ENCODE measurements at regions of chr5 and their contacts with region 1.

Region 1: DNA sequence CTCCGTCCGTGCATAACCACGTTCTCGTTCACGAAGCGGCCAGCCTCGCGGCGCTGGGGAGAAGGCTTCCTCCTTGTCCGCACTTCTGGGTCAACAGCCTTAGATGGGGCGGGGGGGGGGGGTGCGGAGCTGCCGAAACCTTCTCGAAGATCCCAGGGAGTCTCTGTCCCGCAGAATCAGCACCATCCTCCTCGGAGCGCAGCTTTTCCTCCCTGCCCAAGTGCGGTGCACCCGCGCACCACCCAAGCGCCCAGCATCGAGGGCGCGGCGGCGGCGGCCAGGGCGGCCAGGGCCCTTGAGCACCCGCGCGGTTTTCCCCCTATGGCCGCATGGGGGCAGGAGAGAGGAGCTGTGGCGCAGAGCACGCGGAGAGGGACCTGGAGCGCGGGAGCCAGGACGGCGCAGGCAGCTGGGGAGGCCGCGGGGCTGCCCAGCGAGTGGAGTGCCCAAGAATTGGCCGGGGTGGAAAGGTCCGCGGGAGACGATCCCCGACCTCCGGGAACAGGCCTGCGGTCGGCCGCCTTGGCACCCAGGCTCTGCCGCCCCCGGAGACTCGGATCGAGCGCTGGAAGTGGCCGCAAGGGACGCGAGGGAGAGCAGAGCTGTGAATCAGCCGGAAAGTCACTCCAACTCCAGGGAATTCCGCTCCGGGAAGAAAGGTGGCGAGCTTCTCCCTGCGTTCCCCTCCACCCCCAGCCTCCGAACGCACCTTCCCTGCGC is 43.1 kb downstream of the TMEM174 start:
- DNase-seq: peak in 1 of 2 experiments; percentile 92
- H3K4me3 ChIP-seq: peak overlapping the region; percentile 41 to 64 (median 60)
- H3K27ac ChIP-seq: no peak overlapping the region
- H3K4me1 ChIP-seq: peaks cover 5 to 26% (median 9%) of the 10 kb centered on the region in 4 experiments
- H3K27me3 ChIP-seq: peaks cover 15 to 42% (median 38%) of the 10 kb centered on the region in 4 experiments
- CTCF ChIP-seq: peak; percentile 67 to 88 (median 81)
- EP300 ChIP-seq: no peak
- POLR2A ChIP-seq: peak in 1 of 2 experiments; percentile 65; a peak in 1 of 3 replicates
- RAD21 ChIP-seq: peak; percentile 47 to 65; a peak in 3 of 4 replicates

Region 2: GRCh38 chr5:73152411-73153388 is 63.4 kb before region 1 on chr5:
- CTCF ChIA-PET with region 1: interaction called, 12 read pairs
- POLR2A ChIA-PET with region 1: no interaction called
- DNase-seq: no peak
- H3K4me3 ChIP-seq: no peak overlapping the region
- H3K27ac ChIP-seq: no peak overlapping the region
- H3K4me1 ChIP-seq: peaks cover 0 to 2% (median under 1%) of the 10 kb centered on the region in 4 experiments; a peak in 1 of 7 replicates
- H3K27me3 ChIP-seq: no peaks in the 10 kb centered on the region
- CTCF ChIP-seq: peak in 2 of 3 experiments; percentile 42; a peak in 3 of 4 replicates
- EP300 ChIP-seq: no peak
- POLR2A ChIP-seq: no peak
- RAD21 ChIP-seq: peak; percentile 44 to 56

Region 3: DNA sequence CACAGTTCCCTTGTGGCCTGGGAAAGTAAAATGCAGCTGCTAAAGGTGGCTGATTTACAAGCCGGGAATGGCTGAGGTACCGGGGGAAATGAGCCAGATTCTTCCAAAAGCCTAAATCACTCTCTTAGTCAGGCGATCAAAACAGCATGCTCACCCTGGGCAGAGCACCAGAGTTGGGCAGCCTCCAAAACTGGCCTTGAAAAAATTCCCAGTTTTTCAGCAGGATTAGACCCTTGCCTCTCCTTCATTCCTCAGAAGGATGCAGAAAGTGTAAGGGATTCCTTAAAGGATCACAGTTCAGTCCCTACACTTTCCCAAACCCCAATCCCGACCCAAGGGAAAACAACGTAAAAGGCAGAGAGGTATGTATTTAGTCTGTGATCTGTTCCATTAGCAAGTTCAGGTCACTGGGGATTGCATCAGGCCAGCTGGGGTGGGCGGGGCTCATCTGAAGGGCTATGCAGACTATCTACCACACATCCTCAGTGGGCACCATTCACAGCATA is 26.1 kb before region 1 on chr5:
- CTCF ChIA-PET with region 1: interaction called, 13 read pairs
- POLR2A ChIA-PET with region 1: no interaction called
- DNase-seq: no peak
- H3K4me3 ChIP-seq: no peak overlapping the region
- H3K27ac ChIP-seq: no peak overlapping the region
- H3K4me1 ChIP-seq: peaks cover 2 to 8% (median 3%) of the 10 kb centered on the region in 4 experiments; a peak in 5 of 7 replicates
- H3K27me3 ChIP-seq: no peaks in the 10 kb centered on the region
- CTCF ChIP-seq: no peak
- EP300 ChIP-seq: no peak
- POLR2A ChIP-seq: no peak
- RAD21 ChIP-seq: no peak

Region 4: GRCh38 chr5:73233347-73234200 is 17.5 kb after region 1 on chr5:
- CTCF ChIA-PET with region 1: interaction called, 90 read pairs
- POLR2A ChIA-PET with region 1: interaction called, 14 read pairs
- DNase-seq: peak in 1 of 2 experiments; percentile 76
- H3K4me3 ChIP-seq: peak overlapping the region; percentile 9 to 62 (median 40)
- H3K27ac ChIP-seq: no peak overlapping the region
- H3K4me1 ChIP-seq: peaks cover 4 to 30% (median 20%) of the 10 kb centered on the region in 4 experiments
- H3K27me3 ChIP-seq: peaks cover 55 to 82% (median 74%) of the 10 kb centered on the region in 4 experiments
- CTCF ChIP-seq: peak; percentile 28 to 30 (median 29); a peak in 3 of 4 replicates
- EP300 ChIP-seq: no peak
- POLR2A ChIP-seq: no peak
- RAD21 ChIP-seq: peak in 1 of 2 experiments; percentile 16; a peak in 1 of 4 replicates

Region 5: DNA sequence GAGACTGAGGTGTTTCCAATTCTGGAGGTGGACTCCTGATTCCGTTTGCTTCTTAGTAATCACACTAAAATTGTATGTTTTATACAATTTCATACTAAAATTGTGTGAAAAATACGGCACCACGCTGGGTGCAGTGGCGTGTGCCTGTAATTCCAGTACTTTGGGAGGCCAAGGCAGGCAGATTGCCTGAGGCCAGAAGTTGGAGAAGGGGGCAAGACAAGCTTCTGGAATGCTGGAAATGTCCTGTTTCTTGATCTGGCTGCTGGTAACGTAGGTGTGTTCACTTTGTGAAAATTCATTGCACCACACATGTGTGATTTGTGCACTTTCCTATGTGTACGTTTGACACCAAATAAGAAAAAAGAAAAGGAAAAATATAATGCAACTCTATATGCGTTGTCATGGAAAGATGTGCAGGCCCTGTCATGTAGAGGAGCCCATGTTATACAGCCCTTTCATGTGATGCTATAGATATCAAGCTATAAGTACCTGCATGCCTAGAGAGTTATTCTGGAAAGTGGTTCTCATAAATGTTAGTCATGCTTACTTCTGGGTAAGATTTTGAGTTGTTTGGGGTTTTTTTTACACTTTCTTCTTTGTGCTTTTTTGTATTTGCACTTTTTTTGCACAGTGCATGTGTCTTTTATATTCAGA is 76.9 kb after region 1 on chr5:
- CTCF ChIA-PET with region 1: interaction called, 11 read pairs
- POLR2A ChIA-PET with region 1: interaction called, 3 read pairs
- DNase-seq: no peak
- H3K4me3 ChIP-seq: no peak overlapping the region
- H3K27ac ChIP-seq: no peak overlapping the region
- H3K4me1 ChIP-seq: peaks cover 4 to 21% (median 19%) of the 10 kb centered on the region in 4 experiments; a peak in 6 of 7 replicates
- H3K27me3 ChIP-seq: peaks cover 22 to 36% (median 35%) of the 10 kb centered on the region in 4 experiments
- CTCF ChIP-seq: no peak
- EP300 ChIP-seq: no peak
- POLR2A ChIP-seq: no peak
- RAD21 ChIP-seq: no peak

Region 6: GRCh38 chr5:73312146-73312871 is 96.3 kb after region 1 on chr5:
- CTCF ChIA-PET with region 1: interaction called, 53 read pairs
- POLR2A ChIA-PET with region 1: no interaction called
- DNase-seq: no peak
- H3K4me3 ChIP-seq: peak overlapping the region in 1 of 4 experiments; percentile 58; a peak in 2 of 8 replicates
- H3K27ac ChIP-seq: no peak overlapping the region
- H3K4me1 ChIP-seq: peaks cover 0 to 10% (median 3%) of the 10 kb centered on the region in 4 experiments; a peak in 4 of 7 replicates
- H3K27me3 ChIP-seq: peaks cover 8 to 48% (median 39%) of the 10 kb centered on the region in 4 experiments
- CTCF ChIP-seq: peak in 2 of 3 experiments; percentile 42 to 59; a peak in 3 of 4 replicates
- EP300 ChIP-seq: no peak
- POLR2A ChIP-seq: no peak
- RAD21 ChIP-seq: peak; percentile 39 to 51; a peak in 3 of 4 replicates

Region 7: GRCh38 chr5:73327908-73328455 is 111.9 kb after region 1 on chr5:
- CTCF ChIA-PET with region 1: no interaction called
- POLR2A ChIA-PET with region 1: no interaction called
- DNase-seq: no peak
- H3K4me3 ChIP-seq: no peak overlapping the region
- H3K27ac ChIP-seq: no peak overlapping the region
- H3K4me1 ChIP-seq: peaks cover 0 to 2% (median 0%) of the 10 kb centered on the region in 4 experiments; a peak in 1 of 7 replicates
- H3K27me3 ChIP-seq: no peaks in the 10 kb centered on the region; a peak in 1 of 7 replicates
- CTCF ChIP-seq: no peak
- EP300 ChIP-seq: no peak
- POLR2A ChIP-seq: no peak
- RAD21 ChIP-seq: no peak

Region 8: DNA sequence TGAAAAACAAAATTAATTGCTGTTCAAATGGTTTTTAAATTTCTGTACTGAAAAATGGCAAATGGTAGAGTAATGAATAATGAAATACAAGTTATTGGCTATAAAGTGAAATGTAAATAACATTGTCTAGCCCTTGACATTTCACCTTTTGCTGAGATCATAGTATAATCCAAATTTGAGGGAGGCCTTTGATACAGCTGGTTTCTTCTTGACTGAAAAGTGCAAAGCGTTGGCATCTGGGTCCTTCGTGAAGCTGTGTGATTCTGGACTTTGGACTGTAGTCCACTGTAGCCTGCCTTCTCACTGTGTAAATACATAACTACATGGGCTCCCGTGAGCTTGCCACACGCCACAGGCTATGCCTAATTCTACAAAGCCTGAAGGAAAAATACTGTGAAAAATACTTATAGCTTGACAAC is 462.3 kb after region 1 on chr5:
- CTCF ChIA-PET with region 1: no interaction called
- POLR2A ChIA-PET with region 1: no interaction called
- DNase-seq: no peak
- H3K4me3 ChIP-seq: no peak overlapping the region
- H3K27ac ChIP-seq: no peak overlapping the region
- H3K4me1 ChIP-seq: no peaks in the 10 kb centered on the region
- H3K27me3 ChIP-seq: no peaks in the 10 kb centered on the region
- CTCF ChIP-seq: no peak
- EP300 ChIP-seq: no peak
- POLR2A ChIP-seq: no peak
- RAD21 ChIP-seq: no peak